IMR-90 (cell line): ENCODE measurements at regions of chr10 and their contacts with region 1.

Region 1: GRCh38 chr10:57992321-57993077 is 275.2 kb downstream of the IPMK start:
- DNase-seq: peak; percentile 19
- ATAC-seq: no peak
- H3K4me3 ChIP-seq: no peak overlapping the region
- H3K27ac ChIP-seq: no peak overlapping the region
- H3K4me1 ChIP-seq: peaks cover 2% of the 10 kb centered on the region; the same call in 1 of the 2 replicates
- H3K27me3 ChIP-seq: no peaks in the 10 kb centered on the region
- CTCF ChIP-seq: no peak
- POLR2A ChIP-seq: no peak
- RAD21 ChIP-seq: no peak

Region 2: GRCh38 chr10:56222237-56222636 is 1770.3 kb before region 1 on chr10:
- CTCF ChIA-PET with region 1: no interaction called
- POLR2A ChIA-PET with region 1: no interaction called
- dilution Hi-C with region 1: no loop called
- in situ Hi-C with region 1: no loop called
- intact Hi-C with region 1: loop called (anchors 5 kb)
- DNase-seq: no peak
- ATAC-seq: no peak
- H3K4me3 ChIP-seq: no peak overlapping the region
- H3K27ac ChIP-seq: no peak overlapping the region
- H3K4me1 ChIP-seq: no peaks in the 10 kb centered on the region
- H3K27me3 ChIP-seq: no peaks in the 10 kb centered on the region
- CTCF ChIP-seq: no peak
- POLR2A ChIP-seq: no peak
- RAD21 ChIP-seq: no peak

Region 3: GRCh38 chr10:58010073-58010702 is 17.7 kb after region 1 on chr10:
- CTCF ChIA-PET with region 1: interaction called, 4 read pairs
- POLR2A ChIA-PET with region 1: no interaction called
- dilution Hi-C with region 1: no loop called
- in situ Hi-C with region 1: no loop called
- intact Hi-C with region 1: loop called (anchors 2 kb)
- DNase-seq: no peak
- ATAC-seq: no peak
- H3K4me3 ChIP-seq: no peak overlapping the region
- H3K27ac ChIP-seq: no peak overlapping the region
- H3K4me1 ChIP-seq: peaks cover 2% of the 10 kb centered on the region
- H3K27me3 ChIP-seq: no peaks in the 10 kb centered on the region
- CTCF ChIP-seq: no peak
- POLR2A ChIP-seq: no peak
- RAD21 ChIP-seq: no peak

Region 4: GRCh38 chr10:58023341-58024073 is 31.0 kb after region 1 on chr10:
- CTCF ChIA-PET with region 1: no interaction called
- POLR2A ChIA-PET with region 1: no interaction called
- dilution Hi-C with region 1: no loop called
- in situ Hi-C with region 1: no loop called
- intact Hi-C with region 1: no loop called
- DNase-seq: peak; percentile 90
- ATAC-seq: peak; percentile 86
- H3K4me3 ChIP-seq: no peak overlapping the region
- H3K27ac ChIP-seq: peak overlapping the region; percentile 88
- H3K4me1 ChIP-seq: peaks cover 6% of the 10 kb centered on the region; the same call in 1 of the 2 replicates
- H3K27me3 ChIP-seq: no peaks in the 10 kb centered on the region
- CTCF ChIP-seq: no peak
- POLR2A ChIP-seq: no peak
- RAD21 ChIP-seq: no peak